ENCODE measurements at regions of chr1 and their contacts with region 1.

Region 1: GRCh38 chr1:178393370-178393769 is 103.4 kb downstream of the CLEC20A start:
- DNase-seq: no peak
- H3K4me3 ChIP-seq: no peak overlapping the region
- H3K27ac ChIP-seq: no peak overlapping the region
- H3K4me1 ChIP-seq: no peaks in the 10 kb centered on the region
- CTCF ChIP-seq: no peak

Region 2: GRCh38 chr1:178324003-178324402 is 69.4 kb before region 1 on chr1:
- CTCF ChIA-PET with region 1: no interaction called
- POLR2A ChIA-PET with region 1: no interaction called
- intact Hi-C with region 1: no loop called
- DNase-seq: no peak
- H3K4me3 ChIP-seq: no peak overlapping the region
- H3K27ac ChIP-seq: no peak overlapping the region
- H3K4me1 ChIP-seq: no peaks in the 10 kb centered on the region
- CTCF ChIP-seq: no peak

Region 3: DNA sequence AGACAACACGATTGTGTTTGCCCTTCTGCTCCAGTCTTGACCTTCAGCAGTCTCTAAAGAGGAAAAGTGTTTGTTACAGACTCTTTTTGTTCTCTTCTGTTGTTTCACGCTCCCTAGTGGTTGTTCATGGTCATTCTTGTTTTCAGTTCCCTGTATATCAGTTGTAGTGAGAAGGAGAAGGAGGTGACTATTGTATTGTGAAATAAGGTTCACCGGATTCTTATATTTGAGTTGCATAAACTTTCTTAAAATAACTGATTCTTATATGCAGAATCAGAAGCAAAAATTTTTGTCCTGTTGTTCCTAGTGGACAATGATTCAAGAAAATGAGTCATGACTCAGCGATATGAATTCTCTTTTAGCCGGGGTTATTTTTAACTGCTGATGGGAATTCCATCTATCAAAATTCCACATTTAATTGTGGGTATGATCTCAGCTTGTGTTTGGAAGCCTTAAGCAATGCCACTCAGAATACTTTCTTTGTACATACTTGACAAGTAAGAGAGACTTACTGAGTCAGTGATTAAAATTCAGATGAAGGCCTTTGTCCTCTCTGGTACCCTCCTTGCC is 48.8 kb before region 1 on chr1:
- CTCF ChIA-PET with region 1: no interaction called
- POLR2A ChIA-PET with region 1: no interaction called
- intact Hi-C with region 1: loop called (anchors 5 kb)
- DNase-seq: peak; percentile 2
- H3K4me3 ChIP-seq: no peak overlapping the region
- H3K27ac ChIP-seq: no peak overlapping the region
- H3K4me1 ChIP-seq: no peaks in the 10 kb centered on the region
- CTCF ChIP-seq: peak; percentile 54

Region 4: DNA sequence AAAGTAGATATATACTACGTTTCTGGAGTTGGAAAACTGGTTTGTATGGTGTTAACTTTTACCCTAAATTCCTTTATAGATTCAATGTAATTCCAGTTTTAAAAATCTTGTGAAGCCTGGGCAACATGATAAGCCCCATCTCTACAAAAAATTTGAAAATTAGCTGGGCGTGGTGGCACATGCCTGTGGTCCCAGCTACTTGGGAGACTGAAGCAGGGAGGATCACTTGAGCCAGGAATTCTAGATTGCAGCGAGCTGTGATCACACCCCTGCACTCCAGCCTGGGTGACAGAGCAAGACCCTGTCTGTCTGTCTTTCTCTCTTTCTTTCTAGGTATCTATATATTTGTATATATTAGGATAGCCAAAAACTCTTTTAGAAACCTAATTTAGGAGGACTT is 38.6 kb before region 1 on chr1:
- CTCF ChIA-PET with region 1: no interaction called
- POLR2A ChIA-PET with region 1: no interaction called
- intact Hi-C with region 1: no loop called
- DNase-seq: no peak
- H3K4me3 ChIP-seq: no peak overlapping the region
- H3K27ac ChIP-seq: no peak overlapping the region
- H3K4me1 ChIP-seq: no peaks in the 10 kb centered on the region
- CTCF ChIP-seq: no peak

Measured in OCI-LY7 (cell line).